Mammary epithelial cell (primary cell): ENCODE measurements at regions of chr3 and their contacts with region 1.

Region 1: DNA sequence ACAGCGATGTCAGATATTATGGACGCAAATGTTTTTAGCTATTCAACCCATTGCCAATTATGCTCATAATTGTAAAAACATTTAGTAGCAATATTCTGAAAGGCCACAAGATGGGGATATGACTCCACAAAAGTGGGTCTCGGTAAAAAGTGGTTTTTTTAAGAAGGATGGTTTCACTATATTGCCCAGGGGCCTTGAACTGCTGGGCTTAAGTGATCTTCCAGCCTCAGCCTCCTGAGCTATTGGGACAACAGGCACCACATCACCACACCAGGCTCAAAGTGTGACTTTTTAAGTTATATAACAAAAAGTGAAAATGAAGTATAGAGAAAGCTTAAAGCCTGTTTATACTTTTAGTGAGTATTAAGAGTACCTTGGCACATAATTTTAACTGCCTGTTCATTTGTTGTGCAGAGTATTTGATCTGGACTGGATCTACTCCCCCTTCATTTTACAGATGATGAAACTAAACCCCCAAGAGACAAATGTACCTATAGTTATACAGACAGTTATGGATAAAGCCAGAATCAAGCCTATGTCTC is 9.4 kb downstream of the NAA50 start:
- DNase-seq: peak; percentile 45
- H3K4me3 ChIP-seq: no peak overlapping the region
- H3K27ac ChIP-seq: no peak overlapping the region
- H3K4me1 ChIP-seq: no peaks in the 10 kb centered on the region
- H3K27me3 ChIP-seq: no peaks in the 10 kb centered on the region
- CTCF ChIP-seq: peak; percentile 53 to 56

Region 2: GRCh38 chr3:113575206-113575605 is 161.4 kb before region 1 on chr3:
- CTCF ChIA-PET with region 1: no interaction called
- dilution Hi-C with region 1: no loop called
- in situ Hi-C with region 1: no loop called
- intact Hi-C with region 1: no loop called
- DNase-seq: no peak
- H3K4me3 ChIP-seq: no peak overlapping the region
- H3K27ac ChIP-seq: no peak overlapping the region
- H3K4me1 ChIP-seq: no peaks in the 10 kb centered on the region
- H3K27me3 ChIP-seq: peaks cover 2% of the 10 kb centered on the region
- CTCF ChIP-seq: no peak

Region 3: GRCh38 chr3:113783980-113784379 is 47.4 kb after region 1 on chr3:
- CTCF ChIA-PET with region 1: interaction called, 10 read pairs
- dilution Hi-C with region 1: no loop called
- in situ Hi-C with region 1: no loop called
- intact Hi-C with region 1: no loop called
- DNase-seq: no peak
- H3K4me3 ChIP-seq: no peak overlapping the region
- H3K27ac ChIP-seq: no peak overlapping the region
- H3K4me1 ChIP-seq: peaks cover 2% of the 10 kb centered on the region
- H3K27me3 ChIP-seq: no peaks in the 10 kb centered on the region
- CTCF ChIP-seq: no peak

Region 4: DNA sequence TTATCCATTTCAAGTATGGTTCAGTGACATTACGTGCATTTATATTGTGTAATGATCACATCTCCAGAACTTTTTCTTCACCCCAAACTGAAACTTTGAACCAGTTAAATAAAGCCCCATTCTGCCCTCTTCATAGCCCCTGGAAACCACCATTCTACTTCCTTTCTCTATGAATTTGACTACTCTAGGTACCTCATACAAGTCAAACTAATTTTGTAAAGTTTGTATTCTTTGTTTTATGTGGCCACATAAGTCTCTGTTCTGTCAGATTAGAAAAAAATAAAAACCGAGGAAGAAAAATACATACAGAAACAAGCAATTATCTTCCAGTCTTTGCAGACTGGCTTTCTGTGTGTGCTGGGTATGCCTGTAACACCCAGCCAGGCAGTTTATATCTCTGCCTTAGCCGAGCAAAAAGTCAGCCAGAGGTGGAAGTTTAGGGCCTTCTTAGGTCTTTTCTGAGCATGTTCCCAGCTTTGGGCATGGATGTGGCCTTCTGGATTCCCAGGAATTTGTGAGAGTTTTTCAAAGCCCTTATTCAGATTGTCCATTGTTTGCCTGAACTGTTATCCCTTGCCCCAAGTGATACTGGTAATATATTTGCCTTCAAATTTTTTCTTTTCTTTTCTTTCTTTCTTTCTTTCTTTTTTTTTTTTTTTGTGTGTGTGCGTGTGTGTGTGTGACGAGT is 96.0 kb after region 1 on chr3:
- CTCF ChIA-PET with region 1: no interaction called
- dilution Hi-C with region 1: no loop called
- in situ Hi-C with region 1: loop called in 1 of 2 experiments (anchors 5 kb)
- intact Hi-C with region 1: no loop called
- DNase-seq: no peak
- H3K4me3 ChIP-seq: no peak overlapping the region
- H3K27ac ChIP-seq: no peak overlapping the region
- H3K4me1 ChIP-seq: peaks cover 20% of the 10 kb centered on the region
- H3K27me3 ChIP-seq: no peaks in the 10 kb centered on the region
- CTCF ChIP-seq: no peak

Region 5: DNA sequence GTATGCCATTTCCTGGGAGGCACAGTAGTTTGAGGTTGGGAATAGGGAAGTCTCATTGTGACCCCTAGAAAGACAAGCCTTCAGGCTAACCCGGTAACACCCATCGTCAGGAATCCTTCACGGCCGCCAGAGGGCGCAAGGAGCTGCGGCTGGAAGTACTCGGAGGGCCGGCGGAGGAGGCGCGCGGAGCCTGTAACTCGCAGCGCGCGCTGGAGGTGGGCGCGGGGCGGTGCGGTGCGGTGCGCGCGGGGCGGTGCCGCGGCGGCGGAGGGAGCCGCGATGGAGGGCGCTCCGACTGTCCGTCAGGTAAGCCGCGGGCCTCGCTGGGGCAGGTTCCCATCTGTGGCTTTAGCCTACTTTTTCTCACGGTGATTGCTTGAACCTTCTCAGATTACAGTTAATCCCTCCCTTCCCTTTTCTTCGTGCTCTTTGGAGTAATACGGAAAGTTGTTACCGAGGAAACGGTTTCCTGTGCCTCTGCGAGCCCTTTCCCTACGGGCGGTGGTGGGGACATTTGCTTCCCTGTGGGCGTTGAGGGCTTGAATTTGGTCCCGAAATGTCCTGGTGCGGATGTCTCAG is 102.1 kb after region 1 on chr3 and contains the start of gene GRAMD1C:
- CTCF ChIA-PET with region 1: no interaction called
- dilution Hi-C with region 1: no loop called
- in situ Hi-C with region 1: loop called in 1 of 2 experiments (anchors 5 kb)
- intact Hi-C with region 1: loop called (anchors 1 kb)
- DNase-seq: peak; percentile 71
- H3K4me3 ChIP-seq: peak within 1 kb of the TSS; percentile 35 to 64 (median 53)
- H3K27ac ChIP-seq: peak within 1 kb of the TSS; percentile 56
- H3K4me1 ChIP-seq: peaks cover 4% of the 10 kb centered on the region
- H3K27me3 ChIP-seq: no peaks in the 10 kb centered on the region
- CTCF ChIP-seq: peak; percentile 75 to 88
- total RNA-seq, gene GRAMD1C: 1.8 to 2.5 TPM

Region 6: DNA sequence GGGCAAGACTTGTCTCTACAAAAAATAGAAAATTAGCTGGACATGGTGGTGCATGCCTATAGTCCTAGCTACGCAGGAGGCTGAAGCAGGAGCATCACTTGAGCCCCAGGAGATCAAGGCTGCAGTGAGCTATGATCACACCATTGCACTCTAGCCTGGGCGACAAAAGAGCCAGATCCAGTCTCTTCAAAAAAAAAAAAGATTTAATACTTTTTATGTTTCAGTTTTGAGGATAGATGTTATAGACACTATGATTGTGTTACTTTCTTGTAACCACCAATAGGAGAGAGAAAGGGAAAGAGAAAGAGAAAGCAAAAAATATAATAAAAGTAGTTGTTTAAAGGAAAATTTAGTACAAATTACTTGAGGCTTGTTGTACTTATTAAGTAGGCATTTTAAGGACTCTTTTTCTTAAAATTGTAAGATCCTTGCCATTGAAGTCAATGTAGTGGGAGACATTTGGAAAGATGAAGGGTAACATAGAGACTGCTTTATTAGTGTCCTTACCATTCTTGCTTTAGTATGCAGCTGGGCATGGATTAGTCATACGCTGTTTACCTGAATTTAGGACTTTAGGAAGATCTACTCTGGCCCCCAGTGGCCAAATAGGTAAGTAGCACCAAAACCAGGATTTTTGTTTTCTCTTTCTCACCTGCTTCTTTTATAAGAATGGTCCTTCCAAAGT is 176.1 kb after region 1 on chr3:
- CTCF ChIA-PET with region 1: no interaction called
- dilution Hi-C with region 1: no loop called
- in situ Hi-C with region 1: loop called in 1 of 2 experiments (anchors 10 kb)
- intact Hi-C with region 1: loop called (anchors 2 kb)
- DNase-seq: peak; percentile 78
- H3K4me3 ChIP-seq: no peak overlapping the region
- H3K27ac ChIP-seq: no peak overlapping the region
- H3K4me1 ChIP-seq: no peaks in the 10 kb centered on the region
- H3K27me3 ChIP-seq: no peaks in the 10 kb centered on the region
- CTCF ChIP-seq: peak; percentile 85 to 87